Lower leg skin (tissue), 4 donors: ENCODE measurements at regions of chr3 and their contacts with region 1.

Region 1: GRCh38 chr3:184017672-184018423 is at the start of gene ABCC5:
- DNase-seq: peak; percentile 89 to 97
- H3K4me3 ChIP-seq: peak within 1 kb of the TSS; percentile 99
- CTCF ChIP-seq: peak in 1 of 3 donors; percentile 4
- POLR2A ChIP-seq: no peak
- total RNA-seq, gene ABCC5: 8.9 to 14.3 (median 11.9) TPM

Region 2: GRCh38 chr3:183895296-183895695 is 122.6 kb before region 1 on chr3:
- intact Hi-C with region 1: loop called (anchors 5 kb)
- DNase-seq: no peak
- H3K4me3 ChIP-seq: no peak overlapping the region
- CTCF ChIP-seq: peak in 1 of 3 donors; percentile 52
- POLR2A ChIP-seq: no peak

Region 3: GRCh38 chr3:183912895-183913579 is 104.8 kb before region 1 on chr3:
- intact Hi-C with region 1: loop called (anchors 5 kb)
- DNase-seq: no peak
- H3K4me3 ChIP-seq: no peak overlapping the region
- CTCF ChIP-seq: no peak
- POLR2A ChIP-seq: no peak